GM12878 (cell line): ENCODE measurements at regions of chr7 and their contacts with region 1.

Region 1: DNA sequence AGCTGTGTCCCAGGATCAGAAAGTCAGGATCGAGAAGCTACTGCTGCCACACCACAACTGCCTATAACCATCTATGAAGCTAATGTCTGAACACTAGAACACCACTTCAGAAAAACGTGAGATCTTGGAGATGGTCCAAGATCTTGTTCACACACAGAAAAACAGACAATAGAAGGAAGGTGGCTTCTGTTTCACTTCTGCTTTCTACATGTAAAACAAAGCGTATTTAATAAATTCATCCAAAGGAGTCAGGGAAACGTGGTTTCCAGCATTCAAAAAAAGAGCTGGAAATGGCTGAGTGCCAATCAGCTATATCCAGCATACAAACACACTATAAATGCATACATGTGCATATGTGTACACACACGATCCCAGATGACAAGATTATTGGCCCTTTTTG is 70.2 kb upstream of the CCDC71L start:
- DNase-seq: peak; percentile 91
- ATAC-seq: peak; percentile 95
- H3K4me3 ChIP-seq: no peak overlapping the region
- H3K27ac ChIP-seq: peak overlapping the region; percentile 40; the same call in 1 of the 2 replicates
- H3K4me1 ChIP-seq: peaks cover 17% of the 10 kb centered on the region
- H3K27me3 ChIP-seq: no peaks in the 10 kb centered on the region
- CTCF ChIP-seq: no peak
- EP300 ChIP-seq: peak in 1 of 2 experiments; percentile 80; a peak in 2 of 4 replicates
- POLR2A ChIP-seq: no peak
- RAD21 ChIP-seq: 0 out of 2 replicates have a peak, but pooled peaks have one; percentile 7

Region 2: DNA sequence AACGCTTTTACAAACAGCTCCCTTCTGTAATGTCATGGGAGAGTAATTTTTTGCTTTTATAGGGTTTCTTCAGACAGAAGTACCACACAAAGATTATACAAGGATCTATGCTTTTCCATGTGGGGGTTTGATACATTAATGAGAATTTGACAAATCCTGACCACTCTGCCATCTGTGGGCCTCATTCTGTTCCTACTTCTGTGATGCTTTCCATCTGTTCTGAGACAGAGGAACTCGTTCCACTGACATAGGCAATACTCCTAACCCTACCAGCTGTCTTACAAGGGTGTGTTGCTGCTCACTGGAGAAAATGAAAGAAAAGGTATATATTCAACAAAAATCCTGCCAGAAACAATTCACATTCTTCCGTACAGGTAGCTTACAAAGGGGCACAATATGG is 387.0 kb before region 1 on chr7:
- CTCF ChIA-PET with region 1: no interaction called
- POLR2A ChIA-PET with region 1: no interaction called
- RAD21 ChIA-PET with region 1: no interaction called
- SMC1A ChIA-PET with region 1: no interaction called
- in situ Hi-C with region 1: no loop called
- intact Hi-C with region 1: no loop called
- DNase-seq: no peak
- ATAC-seq: no peak
- H3K4me3 ChIP-seq: no peak overlapping the region
- H3K27ac ChIP-seq: no peak overlapping the region
- H3K4me1 ChIP-seq: peaks cover 20% of the 10 kb centered on the region
- H3K27me3 ChIP-seq: no peaks in the 10 kb centered on the region
- CTCF ChIP-seq: no peak
- EP300 ChIP-seq: no peak
- POLR2A ChIP-seq: no peak
- RAD21 ChIP-seq: no peak

Region 3: DNA sequence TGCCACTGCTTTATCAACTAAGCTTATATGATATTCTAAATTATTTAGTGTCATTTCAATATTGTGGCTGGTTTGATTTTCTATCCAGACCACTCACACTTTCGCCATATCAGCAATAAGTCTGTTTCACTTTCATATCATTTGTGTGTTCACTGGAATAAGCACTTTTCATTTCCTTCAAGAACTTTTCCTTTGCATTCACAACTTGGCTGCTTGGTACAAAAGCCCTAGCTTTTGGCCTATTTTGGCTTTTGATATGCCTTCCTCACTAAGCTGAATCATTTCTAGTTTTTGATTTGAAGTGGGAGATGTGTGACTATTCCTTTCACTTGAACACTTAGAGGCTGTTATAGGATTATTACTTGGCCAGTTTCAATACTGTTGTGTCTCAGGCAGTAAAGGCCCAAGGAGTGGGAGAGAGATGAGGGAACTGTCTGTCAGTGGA is 325.5 kb before region 1 on chr7:
- CTCF ChIA-PET with region 1: no interaction called
- POLR2A ChIA-PET with region 1: no interaction called
- RAD21 ChIA-PET with region 1: no interaction called
- SMC1A ChIA-PET with region 1: no interaction called
- in situ Hi-C with region 1: no loop called
- intact Hi-C with region 1: no loop called
- DNase-seq: no peak
- ATAC-seq: peak; percentile 96
- H3K4me3 ChIP-seq: no peak overlapping the region
- H3K27ac ChIP-seq: no peak overlapping the region
- H3K4me1 ChIP-seq: peaks cover 3% of the 10 kb centered on the region; the same call in 1 of the 2 replicates
- H3K27me3 ChIP-seq: no peaks in the 10 kb centered on the region
- CTCF ChIP-seq: no peak
- EP300 ChIP-seq: peak in 1 of 2 experiments; percentile 7; a peak in 1 of 4 replicates
- POLR2A ChIP-seq: no peak
- RAD21 ChIP-seq: no peak

Region 4: GRCh38 chr7:106668861-106669524 is 62.2 kb before region 1 on chr7:
- CTCF ChIA-PET with region 1: interaction called, 19 read pairs
- POLR2A ChIA-PET with region 1: no interaction called
- RAD21 ChIA-PET with region 1: interaction called, 14 read pairs
- SMC1A ChIA-PET with region 1: interaction called, 115 read pairs
- in situ Hi-C with region 1: loop called (anchors 5 kb)
- intact Hi-C with region 1: no loop called
- DNase-seq: no peak
- ATAC-seq: no peak
- H3K4me3 ChIP-seq: no peak overlapping the region
- H3K27ac ChIP-seq: no peak overlapping the region
- H3K4me1 ChIP-seq: no peaks in the 10 kb centered on the region
- H3K27me3 ChIP-seq: no peaks in the 10 kb centered on the region; a peak in 1 of 4 replicates
- CTCF ChIP-seq: no peak
- EP300 ChIP-seq: no peak
- POLR2A ChIP-seq: no peak
- RAD21 ChIP-seq: no peak

Region 5: GRCh38 chr7:106717955-106718871 is 13.0 kb before region 1 on chr7:
- CTCF ChIA-PET with region 1: interaction called, 20 read pairs
- POLR2A ChIA-PET with region 1: interaction called, 5 read pairs
- RAD21 ChIA-PET with region 1: interaction called, 34 read pairs
- SMC1A ChIA-PET with region 1: interaction called, 84 read pairs
- in situ Hi-C with region 1: no loop called
- intact Hi-C with region 1: loop called (anchors 1 kb)
- DNase-seq: peak; percentile 81
- ATAC-seq: peak; percentile 96
- H3K4me3 ChIP-seq: no peak overlapping the region
- H3K27ac ChIP-seq: peak overlapping the region; percentile 54
- H3K4me1 ChIP-seq: peaks cover 41% of the 10 kb centered on the region
- H3K27me3 ChIP-seq: no peaks in the 10 kb centered on the region
- CTCF ChIP-seq: no peak
- EP300 ChIP-seq: peak; percentile 68 to 87; a peak in 3 of 4 replicates
- POLR2A ChIP-seq: no peak
- RAD21 ChIP-seq: peak; percentile 22; the same call in 1 of the 2 replicates

Region 6: GRCh38 chr7:106895246-106895864 is 164.2 kb after region 1 on chr7:
- CTCF ChIA-PET with region 1: no interaction called
- POLR2A ChIA-PET with region 1: no interaction called
- RAD21 ChIA-PET with region 1: no interaction called
- SMC1A ChIA-PET with region 1: no interaction called
- in situ Hi-C with region 1: no loop called
- intact Hi-C with region 1: no loop called
- DNase-seq: peak; percentile 45
- ATAC-seq: peak; percentile 95
- H3K4me3 ChIP-seq: no peak overlapping the region
- H3K27ac ChIP-seq: no peak overlapping the region
- H3K4me1 ChIP-seq: peaks cover 19% of the 10 kb centered on the region
- H3K27me3 ChIP-seq: no peaks in the 10 kb centered on the region
- CTCF ChIP-seq: no peak
- EP300 ChIP-seq: peak; percentile 65 to 67; a peak in 3 of 4 replicates
- POLR2A ChIP-seq: no peak
- RAD21 ChIP-seq: no peak